GM10248 (cell line): ENCODE measurements at regions of chr4 and their contacts with region 1.

Region 1: DNA sequence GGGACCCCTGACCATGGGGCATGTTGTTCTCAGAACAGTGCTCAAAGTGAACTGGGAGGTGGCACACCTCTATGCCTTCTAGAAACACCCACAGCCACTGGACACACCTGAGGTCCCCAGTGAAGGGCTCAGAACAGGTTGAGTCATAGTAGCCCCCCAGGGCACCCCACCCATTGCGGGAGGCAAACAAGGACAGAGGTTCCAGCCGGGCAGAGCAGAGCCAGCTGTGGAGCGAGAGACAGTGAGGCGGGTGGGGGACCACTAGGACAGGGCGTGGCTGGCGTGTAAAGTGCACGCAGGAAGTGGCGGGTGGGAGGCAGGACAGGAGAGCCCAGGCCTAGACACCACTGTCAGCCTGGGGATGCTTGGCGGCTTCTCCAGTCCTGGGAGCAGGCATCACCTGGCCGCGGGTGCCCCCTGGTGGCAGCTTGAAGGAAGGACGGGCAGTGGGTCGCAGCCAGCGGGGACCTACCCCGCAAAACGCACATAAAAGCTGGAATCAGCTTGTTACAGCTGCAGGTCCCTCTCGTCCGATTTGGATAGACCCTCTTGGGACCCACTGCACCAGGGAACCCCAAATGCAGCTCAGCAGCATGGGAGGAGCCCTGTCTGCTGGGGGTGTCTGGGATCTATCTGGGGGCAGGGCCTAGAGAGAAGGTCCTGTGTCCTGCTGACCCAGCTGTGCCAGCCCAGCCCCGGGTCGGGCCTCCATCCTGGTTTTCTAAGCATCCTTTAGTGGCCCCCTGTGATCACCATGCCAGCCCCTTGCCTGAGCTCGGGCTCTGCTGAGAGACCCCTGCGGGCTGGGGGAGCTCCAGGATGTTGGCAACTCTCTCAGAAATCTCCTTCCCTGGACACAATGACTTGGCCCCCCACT is 57.6 kb downstream of the WFS1 start:
- DNase-seq: peak; percentile 90
- CTCF ChIP-seq: peak; percentile 97

Region 2: GRCh38 chr4:6269616-6270511 is 57.4 kb before region 1 on chr4 and contains the start of gene WFS1:
- CTCF ChIA-PET with region 1: interaction called, 514 read pairs
- POLR2A ChIA-PET with region 1: no interaction called
- DNase-seq: peak; percentile 100
- CTCF ChIP-seq: no peak

Region 3: DNA sequence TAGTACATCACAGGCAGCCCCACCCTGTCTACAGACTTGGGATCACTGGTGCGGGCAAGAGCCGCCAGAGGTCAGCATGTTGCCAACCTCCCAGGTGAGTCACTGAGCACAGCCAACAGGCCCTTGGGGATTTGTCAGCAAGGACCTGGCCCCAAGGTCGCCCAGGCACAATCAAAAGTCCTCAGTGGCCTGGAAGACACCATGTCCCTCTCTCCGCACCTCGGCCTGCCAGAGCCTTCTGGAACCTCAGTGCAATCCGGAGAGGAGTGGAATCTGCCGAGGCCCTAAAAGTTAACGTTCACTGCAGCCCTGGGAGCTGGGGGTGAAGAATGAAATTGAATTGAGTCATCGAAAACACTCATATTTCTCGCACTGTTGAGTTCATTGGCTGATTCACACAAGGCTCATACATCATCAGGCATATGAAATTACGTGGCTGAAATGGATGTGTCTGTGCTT is 16.7 kb after region 1 on chr4:
- CTCF ChIA-PET with region 1: interaction called, 19 read pairs
- POLR2A ChIA-PET with region 1: no interaction called
- DNase-seq: no peak
- CTCF ChIP-seq: peak; percentile 16

Region 4: DNA sequence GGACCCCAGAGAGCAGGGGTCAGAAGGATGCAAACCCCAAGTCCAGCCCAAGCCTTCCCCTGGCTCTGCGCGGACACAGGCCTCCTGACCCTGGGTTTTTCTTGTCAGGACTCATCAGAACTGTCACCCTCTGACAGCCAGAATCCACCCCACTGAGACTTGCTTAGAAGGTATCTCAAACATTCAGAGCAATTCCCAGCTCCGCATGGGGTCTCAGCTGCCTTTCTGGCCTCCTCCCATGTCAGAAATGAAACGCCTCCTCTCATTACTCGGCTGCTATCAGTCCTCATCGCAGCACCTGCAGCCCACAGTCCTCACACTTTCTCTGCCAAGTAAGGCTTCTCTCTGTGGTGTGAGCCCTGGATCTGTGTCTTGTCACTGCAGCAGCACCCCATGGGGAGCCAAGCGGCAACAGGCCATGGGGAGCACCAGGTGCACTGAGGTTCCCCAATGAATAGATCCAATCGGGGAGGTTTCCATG is 40.1 kb after region 1 on chr4:
- CTCF ChIA-PET with region 1: interaction called, 11 read pairs
- POLR2A ChIA-PET with region 1: no interaction called
- DNase-seq: no peak
- CTCF ChIP-seq: no peak